Dendritic cell treated with granulocyte-macrophage colony-stimulating factor and Interleukin-4, amounts not matched to agents 40 ng/mL and 50 ng/mL, for 4 days (primary cell): ENCODE measurements at regions of chr3 and their contacts with region 1.

Region 1: DNA sequence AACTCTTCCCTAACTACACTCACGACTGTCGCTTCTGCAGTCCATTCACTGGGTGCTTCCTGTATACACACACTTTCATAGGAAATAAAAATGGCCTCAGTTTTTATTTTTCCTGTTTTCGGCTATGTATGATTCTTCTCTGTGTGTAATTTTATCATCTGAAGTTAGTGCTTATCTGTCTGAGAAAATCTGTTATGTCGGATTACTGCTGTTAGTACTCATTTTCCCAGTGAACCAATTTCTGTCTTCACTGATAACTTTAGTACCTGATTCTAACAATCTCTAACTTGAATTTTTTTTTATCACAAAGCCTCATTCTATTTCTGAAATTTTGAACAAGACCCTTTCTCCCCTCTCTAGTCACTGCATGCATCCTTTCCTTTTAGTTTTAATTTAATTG is 20.9 kb downstream of the RAB5A start:
- H3K4me3 Mint-ChIP-seq: no peak overlapping the region
- H3K27ac Mint-ChIP-seq: no peak overlapping the region
- H3K4me1 Mint-ChIP-seq: peaks cover 49% of the 10 kb centered on the region
- H3K27me3 Mint-ChIP-seq: no peaks in the 10 kb centered on the region

Region 2: DNA sequence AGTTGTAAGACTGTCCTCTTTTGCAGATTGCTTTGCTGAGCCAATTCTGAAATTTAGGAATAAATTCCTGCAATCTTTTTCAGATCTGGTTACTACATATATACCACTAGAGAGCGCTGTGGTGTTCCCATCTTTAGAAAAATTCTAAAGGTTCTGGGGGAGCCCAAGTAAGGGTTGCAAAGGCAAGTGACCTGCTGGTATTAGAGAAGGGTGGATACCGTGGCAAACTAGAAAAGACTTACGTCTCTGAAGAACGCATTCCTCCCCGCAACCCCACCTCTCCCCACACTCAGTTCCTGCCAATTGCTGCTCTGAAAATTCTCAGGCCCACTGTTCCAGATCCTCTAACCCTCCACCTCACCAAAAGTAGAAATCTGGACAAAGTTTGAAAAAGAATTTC is 82.3 kb before region 1 on chr3:
- intact Hi-C with region 1: loop called (anchors 5 kb)
- H3K4me3 Mint-ChIP-seq: no peak overlapping the region
- H3K27ac Mint-ChIP-seq: no peak overlapping the region
- H3K4me1 Mint-ChIP-seq: no peaks in the 10 kb centered on the region
- H3K27me3 Mint-ChIP-seq: no peaks in the 10 kb centered on the region